H1 (cell line): ENCODE measurements at regions of chr6 and their contacts with region 1.

Region 1: DNA sequence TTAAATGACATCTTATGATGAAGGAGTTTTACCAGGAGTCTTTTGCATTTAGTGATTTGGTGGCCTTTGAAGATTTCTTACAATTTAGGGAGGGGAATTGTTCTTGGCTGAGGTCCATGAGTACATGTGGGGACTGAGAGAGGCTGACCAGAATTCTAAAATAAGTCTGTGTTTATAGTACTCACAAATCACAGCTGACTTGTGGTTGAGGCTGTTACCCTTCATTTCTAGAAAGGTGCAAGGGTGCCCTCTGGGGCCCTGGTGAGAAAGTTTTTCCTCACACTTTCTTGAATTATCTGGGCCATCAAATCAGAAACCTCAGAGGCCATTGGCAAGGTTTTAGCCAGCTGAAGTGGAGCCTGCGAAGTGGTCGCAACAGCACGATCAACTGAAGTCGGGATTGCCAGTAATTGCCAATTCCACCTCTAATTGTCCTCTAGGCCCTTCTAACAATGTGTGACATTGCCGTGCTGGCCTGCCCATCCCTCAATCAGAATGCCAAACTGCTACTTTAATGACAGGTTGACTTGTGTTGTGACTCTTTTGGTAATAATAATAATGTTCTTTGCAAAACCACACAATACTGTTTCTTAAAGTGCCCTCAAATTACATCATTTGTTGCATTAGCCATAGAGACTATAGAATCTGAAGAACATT is 221.6 kb downstream of the OGFRL1 start:
- DNase-seq: peak; percentile 19 to 56
- H3K4me3 ChIP-seq: no peak overlapping the region
- H3K27ac ChIP-seq: no peak overlapping the region
- H3K4me1 ChIP-seq: no peaks in the 10 kb centered on the region
- H3K27me3 ChIP-seq: no peaks in the 10 kb centered on the region
- CTCF ChIP-seq: peak in 2 of 3 experiments; percentile 49 to 71; a peak in 3 of 4 replicates
- EP300 ChIP-seq: no peak
- POLR2A ChIP-seq: no peak
- RAD21 ChIP-seq: peak; percentile 91 to 92

Region 2: DNA sequence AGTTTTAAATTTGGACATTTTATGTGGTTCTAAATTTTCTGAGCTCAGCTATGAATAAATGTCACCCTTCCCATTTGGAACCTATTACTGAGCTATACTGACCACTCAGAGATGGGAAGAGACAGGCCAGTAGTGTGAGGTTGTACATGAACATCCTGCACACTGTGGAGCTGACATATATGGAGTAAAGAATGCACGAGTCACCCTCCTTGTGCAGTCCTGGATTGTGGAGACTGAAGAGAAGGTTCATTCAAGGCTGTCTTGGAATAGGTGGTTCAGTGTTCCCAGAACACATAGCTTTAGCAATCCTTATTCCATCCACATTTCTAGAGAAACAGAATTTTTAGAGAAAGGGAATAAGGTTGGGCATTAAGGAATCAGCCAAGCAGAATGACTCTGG is 271.8 kb before region 1 on chr6:
- CTCF ChIA-PET with region 1: no interaction called
- POLR2A ChIA-PET with region 1: no interaction called
- DNase-seq: no peak
- H3K4me3 ChIP-seq: no peak overlapping the region
- H3K27ac ChIP-seq: no peak overlapping the region
- H3K4me1 ChIP-seq: peaks cover 0 to 7% (median 2%) of the 10 kb centered on the region in 4 experiments; a peak in 3 of 7 replicates
- H3K27me3 ChIP-seq: no peaks in the 10 kb centered on the region
- CTCF ChIP-seq: no peak
- EP300 ChIP-seq: no peak
- POLR2A ChIP-seq: no peak
- RAD21 ChIP-seq: no peak

Region 3: DNA sequence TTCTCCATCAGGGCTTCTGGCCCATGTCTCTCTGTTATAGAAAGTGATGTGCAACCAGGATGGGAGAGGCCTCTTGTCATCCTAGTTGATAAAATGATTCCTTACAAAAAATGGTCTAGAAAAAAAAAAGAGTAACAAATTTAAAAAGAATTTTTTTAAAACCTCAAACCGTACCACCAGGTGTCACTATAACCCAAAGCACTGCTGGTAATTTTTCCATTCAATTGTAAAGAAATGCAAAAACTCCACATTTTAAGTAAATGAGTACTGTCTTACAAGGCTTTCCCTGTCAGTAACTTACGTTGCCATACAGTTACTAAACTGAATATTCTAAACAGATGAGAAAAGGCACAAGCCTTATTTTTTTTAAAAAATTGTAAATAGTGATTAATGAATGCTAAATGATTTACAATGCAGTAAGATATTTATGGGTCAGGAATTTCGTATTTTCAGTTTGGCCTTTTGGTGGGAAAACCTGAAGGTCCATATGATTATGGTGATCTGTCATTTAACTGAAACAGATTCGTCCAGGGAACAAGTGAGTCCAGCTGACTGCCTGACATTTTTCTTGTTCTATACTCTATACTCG is 126.2 kb before region 1 on chr6:
- CTCF ChIA-PET with region 1: interaction called, 52 read pairs
- POLR2A ChIA-PET with region 1: no interaction called
- DNase-seq: no peak
- H3K4me3 ChIP-seq: no peak overlapping the region
- H3K27ac ChIP-seq: no peak overlapping the region
- H3K4me1 ChIP-seq: peaks cover 0 to 4% (median 2%) of the 10 kb centered on the region in 4 experiments; a peak in 2 of 7 replicates
- H3K27me3 ChIP-seq: no peaks in the 10 kb centered on the region
- CTCF ChIP-seq: peak in 2 of 3 experiments; percentile 43 to 50; a peak in 2 of 4 replicates
- EP300 ChIP-seq: no peak
- POLR2A ChIP-seq: no peak
- RAD21 ChIP-seq: peak; percentile 75 to 89